ENCODE measurements at regions of chr2 and their contacts with region 1.

Region 1: DNA sequence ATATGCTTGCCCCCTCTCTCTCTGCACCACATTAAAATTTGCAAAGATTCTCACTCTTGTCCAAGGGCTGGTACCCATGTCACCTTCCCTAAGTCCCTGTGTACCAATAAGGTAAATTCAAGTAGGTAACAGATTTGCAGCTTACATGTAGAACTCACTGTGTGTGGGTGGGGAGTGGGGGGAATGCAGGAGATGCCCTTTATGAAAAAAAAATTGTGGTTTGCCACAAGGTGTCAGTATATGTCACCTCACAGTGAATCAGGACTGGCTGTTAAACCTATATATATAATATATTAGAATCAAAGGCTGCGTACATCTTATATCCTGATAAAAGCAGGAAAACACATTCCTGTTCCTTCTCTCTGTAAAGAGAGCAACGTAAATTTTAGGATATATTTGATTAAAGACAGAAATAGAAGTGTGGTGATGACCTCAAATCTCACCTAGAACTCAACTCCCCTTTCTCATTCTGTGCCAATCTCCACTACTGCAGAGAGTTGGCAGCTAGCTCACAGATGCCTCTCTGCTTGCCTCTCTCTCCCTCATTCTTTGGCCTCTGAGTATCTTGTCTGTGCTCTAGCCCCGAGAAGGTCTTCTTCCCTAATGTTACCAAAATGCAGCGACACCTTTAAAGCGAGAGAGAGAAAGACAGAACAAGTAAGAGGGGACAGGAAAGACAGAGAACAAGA is 536 bp downstream of the XDH start:
- DNase-seq: no peak
- ATAC-seq: no peak
- H3K4me3 Mint-ChIP-seq: no peak overlapping the region
- H3K27ac Mint-ChIP-seq: no peak overlapping the region
- H3K4me1 Mint-ChIP-seq: peaks cover 10% of the 10 kb centered on the region
- H3K27me3 Mint-ChIP-seq: peaks cover 11% of the 10 kb centered on the region

Region 2: GRCh38 chr2:31523871-31524492 is 110.0 kb after region 1 on chr2:
- CTCF ChIA-PET with region 1: interaction called, 6 read pairs
- POLR2A ChIA-PET with region 1: no interaction called
- intact Hi-C with region 1: loop called (anchors 1 to 10 kb)
- DNase-seq: peak; percentile 71
- ATAC-seq: peak; percentile 53
- H3K4me3 Mint-ChIP-seq: no peak overlapping the region
- H3K27ac Mint-ChIP-seq: no peak overlapping the region
- H3K4me1 Mint-ChIP-seq: no peaks in the 10 kb centered on the region
- H3K27me3 Mint-ChIP-seq: peaks cover 12% of the 10 kb centered on the region